ENCODE measurements at regions of chr1 and their contacts with region 1.

Region 1: GRCh38 chr1:56821140-56821797 is 2.1 kb upstream of the FYB2 start:
- DNase-seq: peak; percentile 89
- ATAC-seq: peak; percentile 85
- H3K4me3 ChIP-seq: peak overlapping the region; percentile 46; the same call in 1 of the 2 replicates
- H3K27ac ChIP-seq: peak overlapping the region; percentile 44
- H3K4me1 ChIP-seq: peaks cover 14% of the 10 kb centered on the region
- H3K27me3 ChIP-seq: 0 out of 2 replicates have a peak, but pooled peaks cover 5% of the 10 kb centered on the region
- CTCF ChIP-seq: peak; percentile 97

Region 2: GRCh38 chr1:56709269-56709880 is 111.9 kb before region 1 on chr1:
- CTCF ChIA-PET with region 1: no interaction called
- POLR2A ChIA-PET with region 1: no interaction called
- intact Hi-C with region 1: loop called (anchors 5 kb)
- DNase-seq: peak; percentile 87
- ATAC-seq: peak; percentile 70
- H3K4me3 ChIP-seq: no peak overlapping the region
- H3K27ac ChIP-seq: no peak overlapping the region
- H3K4me1 ChIP-seq: peaks cover 15% of the 10 kb centered on the region
- H3K27me3 ChIP-seq: no peaks in the 10 kb centered on the region
- CTCF ChIP-seq: peak; percentile 77

Region 3: DNA sequence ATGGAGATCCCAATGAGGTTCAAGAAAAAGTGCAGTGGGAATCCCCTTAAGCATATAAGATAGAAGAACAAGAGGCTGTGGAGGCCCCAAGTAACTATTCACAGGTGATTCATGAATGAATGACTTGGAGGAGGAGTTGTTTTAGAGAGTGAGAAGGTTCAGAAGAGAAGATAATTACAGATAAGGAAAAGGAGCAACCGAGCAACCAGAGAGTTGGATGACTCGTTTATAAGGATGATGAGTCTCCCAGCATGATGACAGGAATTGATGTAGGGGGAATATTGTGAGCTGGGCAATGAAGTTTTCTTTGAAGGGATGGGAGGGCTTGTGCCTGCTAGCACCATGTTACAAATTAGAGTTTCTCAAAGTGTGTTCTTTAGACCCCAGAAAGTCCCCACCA is 43.2 kb after region 1 on chr1:
- CTCF ChIA-PET with region 1: no interaction called
- POLR2A ChIA-PET with region 1: no interaction called
- intact Hi-C with region 1: no loop called
- DNase-seq: no peak
- ATAC-seq: no peak
- H3K4me3 ChIP-seq: no peak overlapping the region
- H3K27ac ChIP-seq: no peak overlapping the region
- H3K4me1 ChIP-seq: no peaks in the 10 kb centered on the region
- H3K27me3 ChIP-seq: peaks cover 54% of the 10 kb centered on the region
- CTCF ChIP-seq: no peak